Activated CD8-positive, alpha-beta T cell treated with anti-CD3 and anti-CD28 coated beads, Interleukin-2, amount 10 ng/mL, durations not matched to agents 7 days and 5 days (primary cell): ENCODE measurements at regions of chr7 and their contacts with region 1.

Region 1: GRCh38 chr7:92609921-92610518 is 19.8 kb upstream of the FAM133B start:
- DNase-seq: no peak
- ATAC-seq: peak; percentile 47
- H3K4me3 Mint-ChIP-seq: no peak overlapping the region
- H3K27ac Mint-ChIP-seq: peak overlapping the region; percentile 33
- H3K4me1 Mint-ChIP-seq: peaks cover 17% of the 10 kb centered on the region
- H3K27me3 Mint-ChIP-seq: no peaks in the 10 kb centered on the region

Region 2: GRCh38 chr7:92528188-92528957 is 81.6 kb before region 1 on chr7 and contains the starts of genes PEX1 and RBM48:
- CTCF ChIA-PET with region 1: interaction called, 15 read pairs
- POLR2A ChIA-PET with region 1: interaction called, 7 read pairs
- DNase-seq: peak; percentile 97
- ATAC-seq: peak; percentile 94
- H3K4me3 Mint-ChIP-seq: peak within 1 kb of the TSS; percentile 93
- H3K27ac Mint-ChIP-seq: peak within 1 kb of the TSS; percentile 99
- H3K4me1 Mint-ChIP-seq: peaks cover 29% of the 10 kb centered on the region
- H3K27me3 Mint-ChIP-seq: no peaks in the 10 kb centered on the region
- total RNA-seq, gene PEX1: 13.6 to 16.8 TPM
- total RNA-seq, gene RBM48: 14.5 to 15.4 TPM

Region 3: DNA sequence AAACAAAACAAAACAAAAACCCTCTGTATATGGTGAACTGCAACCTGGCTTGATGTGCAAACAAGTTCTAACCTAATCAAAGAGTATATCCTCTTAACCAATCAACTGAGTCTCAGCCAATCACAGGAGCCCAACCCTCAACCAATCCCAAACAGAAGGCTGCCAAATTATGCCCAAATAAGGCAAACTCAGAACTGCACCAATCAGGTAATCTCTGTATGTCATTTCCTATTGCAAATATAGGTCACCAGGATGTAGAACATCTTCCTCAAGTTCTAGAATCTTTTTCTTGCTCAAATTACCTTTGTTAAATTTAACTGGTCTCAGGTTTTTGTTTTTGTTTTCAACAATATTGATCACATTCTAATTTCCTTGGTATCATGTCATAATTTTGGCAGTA is 25.0 kb before region 1 on chr7:
- CTCF ChIA-PET with region 1: interaction called, 57 read pairs
- POLR2A ChIA-PET with region 1: interaction called, 6 read pairs
- DNase-seq: peak; percentile 32
- ATAC-seq: peak; percentile 26
- H3K4me3 Mint-ChIP-seq: no peak overlapping the region
- H3K27ac Mint-ChIP-seq: peak overlapping the region; percentile 73
- H3K4me1 Mint-ChIP-seq: peaks cover 54% of the 10 kb centered on the region
- H3K27me3 Mint-ChIP-seq: no peaks in the 10 kb centered on the region

Region 4: DNA sequence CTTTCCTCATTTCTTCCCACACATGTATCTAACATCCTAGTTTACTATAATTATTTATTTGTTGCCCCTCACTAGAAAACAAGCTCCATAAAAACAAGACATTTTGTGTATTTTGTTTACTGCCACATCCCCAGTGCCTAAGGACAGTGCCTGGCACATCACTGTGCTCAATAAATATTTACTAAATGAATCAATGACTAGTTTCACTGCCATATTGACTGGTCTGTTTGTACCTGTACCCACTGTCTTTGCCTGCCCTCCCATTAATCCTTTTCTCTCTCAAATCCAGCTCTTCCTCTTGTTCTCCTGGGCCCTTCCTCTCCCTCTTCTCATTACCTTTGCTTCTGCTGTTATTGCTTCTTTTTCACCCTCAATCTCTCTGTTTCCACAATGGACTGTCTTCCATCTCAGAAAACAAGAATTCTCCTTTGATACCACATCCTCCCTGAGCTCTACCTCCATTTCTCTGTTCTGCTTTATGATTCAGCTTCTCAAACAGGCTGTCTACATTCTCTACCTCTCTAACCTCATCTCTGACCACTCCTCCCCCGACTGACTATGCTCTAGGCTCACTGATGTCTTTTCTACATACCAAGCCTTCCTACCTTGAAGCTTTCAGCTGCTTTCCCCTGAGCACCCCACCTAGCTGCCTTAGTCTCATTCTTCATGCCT is 11.6 kb before region 1 on chr7:
- CTCF ChIA-PET with region 1: interaction called, 24 read pairs
- POLR2A ChIA-PET with region 1: interaction called, 4 read pairs
- DNase-seq: no peak
- ATAC-seq: peak; percentile 48
- H3K4me3 Mint-ChIP-seq: no peak overlapping the region
- H3K27ac Mint-ChIP-seq: no peak overlapping the region
- H3K4me1 Mint-ChIP-seq: no peaks in the 10 kb centered on the region
- H3K27me3 Mint-ChIP-seq: peaks cover 4% of the 10 kb centered on the region

Region 5: DNA sequence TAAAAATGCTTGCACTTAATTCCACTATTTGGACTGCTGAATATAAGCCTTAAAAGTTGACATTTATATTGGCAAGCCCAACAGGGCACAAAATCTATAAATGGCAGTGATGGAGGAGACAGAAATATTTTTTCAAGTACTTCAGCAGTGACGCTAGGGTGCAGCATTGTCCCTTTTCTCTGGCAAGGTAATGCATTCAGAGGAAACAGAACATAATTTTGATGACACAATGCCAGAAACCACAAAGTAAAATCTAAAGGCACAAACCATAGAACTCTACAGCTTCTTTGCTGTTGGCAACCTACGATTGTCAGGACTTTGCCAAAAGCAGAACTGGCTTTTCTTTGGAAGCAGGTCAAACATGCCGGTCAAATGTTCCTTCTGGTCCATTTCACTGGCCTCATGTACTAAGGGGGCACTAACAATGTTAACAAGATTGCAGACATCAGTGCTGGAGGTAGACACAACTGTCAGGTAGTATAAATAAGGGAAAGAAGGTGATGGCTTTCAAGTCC is 11.1 kb after region 1 on chr7:
- CTCF ChIA-PET with region 1: interaction called, 20 read pairs
- POLR2A ChIA-PET with region 1: no interaction called
- DNase-seq: peak; percentile 90
- ATAC-seq: peak; percentile 82
- H3K4me3 Mint-ChIP-seq: peak overlapping the region; percentile 9
- H3K27ac Mint-ChIP-seq: peak overlapping the region; percentile 83
- H3K4me1 Mint-ChIP-seq: peaks cover 54% of the 10 kb centered on the region
- H3K27me3 Mint-ChIP-seq: no peaks in the 10 kb centered on the region